CD4-positive, alpha-beta T cell (primary cell): ENCODE measurements at regions of chr15 and their contacts with region 1.

Region 1: GRCh38 chr15:66497502-66498455 is at the start of gene SNAPC5:
- DNase-seq: peak; percentile 95 to 98 (median 97)
- ATAC-seq: peak; percentile 88
- H3K4me3 ChIP-seq: peak within 1 kb of the TSS; percentile 85
- H3K4me3 Mint-ChIP-seq: peak within 1 kb of the TSS; percentile 99
- H3K27ac ChIP-seq: peak within 1 kb of the TSS; percentile 89 to 93
- H3K27ac Mint-ChIP-seq: peak within 1 kb of the TSS; percentile 99
- H3K4me1 ChIP-seq: peaks cover 33% of the 10 kb centered on the region
- H3K4me1 Mint-ChIP-seq: peaks cover 66% of the 10 kb centered on the region
- H3K27me3 ChIP-seq: no peaks in the 10 kb centered on the region
- H3K27me3 Mint-ChIP-seq: no peaks in the 10 kb centered on the region
- CTCF ChIP-seq: peak; percentile 100
- total RNA-seq, gene SNAPC5: 23.8 to 24.1 TPM

Region 2: GRCh38 chr15:66251790-66252684 is 245.7 kb before region 1 on chr15:
- CTCF ChIA-PET with region 1: interaction called, 3 read pairs
- POLR2A ChIA-PET with region 1: interaction called, 4 read pairs
- intact Hi-C with region 1: loop called (anchors 2 to 5 kb)
- DNase-seq: peak in 13 of 14 experiments; percentile 12 to 68 (median 36)
- ATAC-seq: peak; percentile 59
- H3K4me3 ChIP-seq: peak overlapping the region; percentile 60
- H3K4me3 Mint-ChIP-seq: peak overlapping the region; percentile 80
- H3K27ac ChIP-seq: no peak overlapping the region
- H3K27ac Mint-ChIP-seq: no peak overlapping the region
- H3K4me1 ChIP-seq: peaks cover 34% of the 10 kb centered on the region
- H3K4me1 Mint-ChIP-seq: peaks cover 13% of the 10 kb centered on the region
- H3K27me3 ChIP-seq: peaks cover 64 to 72% of the 10 kb centered on the region in 2 experiments
- H3K27me3 Mint-ChIP-seq: peaks cover 73% of the 10 kb centered on the region
- CTCF ChIP-seq: peak; percentile 56

Region 3: GRCh38 chr15:66293419-66294156 is 204.2 kb before region 1 on chr15 and contains the start of gene DIS3L:
- CTCF ChIA-PET with region 1: interaction called, 13 read pairs
- POLR2A ChIA-PET with region 1: interaction called, 12 read pairs
- intact Hi-C with region 1: loop called in 1 of 2 experiments (anchors 2 kb)
- DNase-seq: peak; percentile 36 to 86 (median 58)
- ATAC-seq: peak; percentile 72
- H3K4me3 ChIP-seq: peak within 1 kb of the TSS; percentile 75
- H3K4me3 Mint-ChIP-seq: peak within 1 kb of the TSS; percentile 92
- H3K27ac ChIP-seq: peak within 1 kb of the TSS; percentile 80 to 93
- H3K27ac Mint-ChIP-seq: peak within 1 kb of the TSS; percentile 97
- H3K4me1 ChIP-seq: peaks cover 33% of the 10 kb centered on the region
- H3K4me1 Mint-ChIP-seq: peaks cover 49% of the 10 kb centered on the region
- H3K27me3 ChIP-seq: no peaks in the 10 kb centered on the region
- H3K27me3 Mint-ChIP-seq: no peaks in the 10 kb centered on the region
- CTCF ChIP-seq: no peak
- total RNA-seq, gene DIS3L: 22.6 to 24.3 TPM

Region 4: DNA sequence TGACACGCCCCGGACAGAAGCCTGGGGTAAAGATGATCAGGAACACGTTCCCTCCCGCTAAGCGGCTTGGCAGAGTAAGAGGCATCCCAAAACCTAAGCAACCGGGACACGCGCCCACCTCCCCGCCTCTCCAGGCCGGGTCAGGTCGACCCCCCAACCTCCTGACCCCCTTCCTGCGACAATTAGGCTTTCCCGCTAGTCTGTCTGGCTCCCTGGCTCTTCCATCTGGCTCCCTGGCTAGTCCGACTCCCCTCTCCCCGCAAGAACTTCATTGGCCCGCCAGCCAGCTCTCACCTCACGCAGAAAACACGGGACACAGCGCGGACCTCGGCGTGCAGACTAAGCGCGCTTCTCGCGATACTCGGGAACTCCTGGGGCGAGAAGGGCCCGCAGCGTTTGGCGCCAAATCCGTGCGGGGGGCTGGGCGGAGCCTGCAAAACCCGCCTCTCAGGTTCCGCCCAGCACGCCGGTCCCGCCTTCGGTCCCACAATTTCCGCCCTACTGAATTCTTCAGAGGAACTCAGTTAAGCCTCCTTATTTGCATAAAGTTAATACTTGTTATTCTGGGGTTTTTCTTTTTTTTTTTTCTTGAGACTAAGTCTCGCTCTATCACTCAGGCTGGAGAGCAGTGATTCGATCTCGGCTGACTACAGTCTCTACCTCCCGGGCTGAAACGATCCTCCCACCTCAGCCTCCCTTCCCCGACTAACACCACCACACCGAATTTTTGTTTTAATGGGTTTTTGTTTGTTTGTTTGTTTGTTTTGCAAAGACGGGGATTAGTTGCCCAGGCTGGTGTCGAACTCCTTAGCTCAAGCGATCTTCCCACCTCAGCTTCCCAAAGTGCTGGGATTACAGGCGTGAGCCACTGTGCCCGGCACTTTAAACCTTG is 141.2 kb before region 1 on chr15 and contains the start of gene TIPIN:
- CTCF ChIA-PET with region 1: interaction called, 15 read pairs
- POLR2A ChIA-PET with region 1: interaction called, 8 read pairs
- intact Hi-C with region 1: loop called (anchors 1 to 2 kb)
- DNase-seq: peak; percentile 94 to 99 (median 96)
- ATAC-seq: peak; percentile 96
- H3K4me3 ChIP-seq: peak within 1 kb of the TSS; percentile 74
- H3K4me3 Mint-ChIP-seq: peak within 1 kb of the TSS; percentile 89
- H3K27ac ChIP-seq: peak within 1 kb of the TSS; percentile 24 to 56
- H3K27ac Mint-ChIP-seq: peak within 1 kb of the TSS; percentile 81
- H3K4me1 ChIP-seq: peaks cover 20% of the 10 kb centered on the region
- H3K4me1 Mint-ChIP-seq: peaks cover 23% of the 10 kb centered on the region
- H3K27me3 ChIP-seq: no peaks in the 10 kb centered on the region
- H3K27me3 Mint-ChIP-seq: no peaks in the 10 kb centered on the region
- CTCF ChIP-seq: no peak
- total RNA-seq, gene TIPIN: 3.7 to 3.9 TPM

Region 5: DNA sequence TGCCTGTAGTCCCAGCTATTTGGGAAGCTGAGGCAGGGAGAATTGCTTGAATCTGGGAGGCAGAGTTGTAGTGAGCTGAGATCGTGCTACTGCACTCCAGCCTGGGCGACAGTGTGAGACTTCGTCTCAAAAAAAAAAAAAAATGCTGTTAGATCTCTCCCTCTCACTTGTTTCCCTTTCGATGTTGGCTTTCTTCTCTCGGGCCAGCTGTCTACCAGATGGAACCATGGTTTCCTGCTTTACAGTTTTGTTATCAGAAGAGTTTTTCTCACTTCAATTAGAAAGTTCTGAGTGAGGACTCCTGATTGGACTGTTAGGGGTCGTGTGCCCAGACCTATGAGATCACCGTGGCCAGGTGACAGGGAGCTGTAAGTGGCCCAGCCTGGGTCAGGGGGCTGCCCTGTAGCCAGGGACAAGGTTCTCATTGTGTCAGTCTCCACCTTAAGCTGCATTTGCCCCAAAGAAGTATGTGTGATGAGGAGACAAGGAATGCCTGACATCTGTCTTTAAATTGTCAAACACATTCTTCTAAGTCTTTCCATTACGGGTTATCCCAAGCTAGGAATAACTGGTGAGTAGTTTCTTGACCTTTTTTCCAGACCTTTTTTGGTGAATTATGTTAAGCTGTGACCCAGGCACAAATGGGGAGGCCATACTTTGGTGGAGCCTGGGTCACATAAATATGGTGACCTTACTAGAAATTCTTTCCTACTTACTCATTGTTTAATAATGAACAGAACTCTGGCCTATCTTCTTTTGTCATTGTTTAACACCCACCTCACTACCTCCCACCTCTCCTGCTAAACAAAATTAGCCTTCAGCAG is 25.4 kb before region 1 on chr15:
- CTCF ChIA-PET with region 1: interaction called, 22 read pairs
- POLR2A ChIA-PET with region 1: interaction called, 27 read pairs
- intact Hi-C with region 1: loop called in 1 of 2 experiments (anchors 1 kb)
- DNase-seq: peak; percentile 7 to 83 (median 31)
- ATAC-seq: peak; percentile 94
- H3K4me3 ChIP-seq: peak overlapping the region; percentile 33
- H3K4me3 Mint-ChIP-seq: peak overlapping the region; percentile 69
- H3K27ac ChIP-seq: peak overlapping the region; percentile 25 to 48
- H3K27ac Mint-ChIP-seq: peak overlapping the region; percentile 88
- H3K4me1 ChIP-seq: peaks cover 23% of the 10 kb centered on the region
- H3K4me1 Mint-ChIP-seq: peaks cover 58% of the 10 kb centered on the region
- H3K27me3 ChIP-seq: no peaks in the 10 kb centered on the region
- H3K27me3 Mint-ChIP-seq: no peaks in the 10 kb centered on the region
- CTCF ChIP-seq: no peak

Region 6: GRCh38 chr15:66966257-66966656 is 468.5 kb after region 1 on chr15:
- CTCF ChIA-PET with region 1: no interaction called
- POLR2A ChIA-PET with region 1: no interaction called
- intact Hi-C with region 1: no loop called
- DNase-seq: peak in 2 of 14 experiments; percentile 19 to 40
- ATAC-seq: no peak
- H3K4me3 ChIP-seq: no peak overlapping the region
- H3K4me3 Mint-ChIP-seq: no peak overlapping the region
- H3K27ac ChIP-seq: no peak overlapping the region
- H3K27ac Mint-ChIP-seq: no peak overlapping the region
- H3K4me1 ChIP-seq: no peaks in the 10 kb centered on the region
- H3K4me1 Mint-ChIP-seq: no peaks in the 10 kb centered on the region
- H3K27me3 ChIP-seq: no peaks in the 10 kb centered on the region
- H3K27me3 Mint-ChIP-seq: no peaks in the 10 kb centered on the region
- CTCF ChIP-seq: peak; percentile 49